AG04449 (cell line): ENCODE measurements at regions of chr2 and their contacts with region 1.

Region 1: DNA sequence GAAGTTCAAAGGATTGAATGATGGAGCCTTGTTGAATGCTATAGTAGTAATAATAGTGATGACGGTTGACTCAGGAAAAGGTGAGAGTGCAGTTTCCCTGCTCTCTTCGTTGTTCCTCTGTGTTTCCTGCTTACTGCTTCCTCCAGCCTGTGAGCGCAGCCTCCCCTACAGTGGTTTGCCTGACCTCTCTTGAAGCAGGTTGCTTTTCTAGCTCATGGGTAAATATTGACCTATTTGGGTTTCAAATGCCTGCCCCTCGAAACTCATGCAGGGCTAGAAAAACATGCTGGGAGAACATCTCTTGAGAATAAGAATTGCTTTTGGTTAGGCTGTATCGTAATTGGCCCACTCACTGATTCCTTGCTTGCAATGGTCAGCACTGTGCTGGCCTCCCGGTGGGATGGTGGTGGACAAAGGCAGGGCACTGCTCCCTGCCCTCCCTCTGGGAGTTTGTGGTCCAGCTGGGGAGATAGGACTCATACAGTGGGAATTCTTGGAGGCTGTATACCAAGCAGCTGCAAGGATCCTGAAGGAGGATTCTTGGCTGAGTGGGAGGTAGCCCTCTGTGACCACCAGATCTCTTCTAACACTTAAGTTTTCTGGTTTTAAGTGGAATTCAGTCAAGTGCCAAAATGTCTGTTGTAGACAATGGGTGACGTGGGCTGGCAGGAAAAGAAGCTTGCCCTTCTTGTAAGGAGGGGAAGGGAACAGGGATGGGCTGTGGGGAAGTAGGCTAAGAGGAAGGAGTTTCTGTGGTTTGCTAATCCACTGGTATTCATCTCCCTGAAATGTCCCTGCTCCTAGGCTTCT is 5.4 kb upstream of the RNF181 start:
- DNase-seq: peak; percentile 79
- H3K4me3 ChIP-seq: no peak overlapping the region
- CTCF ChIP-seq: no peak

Region 2: DNA sequence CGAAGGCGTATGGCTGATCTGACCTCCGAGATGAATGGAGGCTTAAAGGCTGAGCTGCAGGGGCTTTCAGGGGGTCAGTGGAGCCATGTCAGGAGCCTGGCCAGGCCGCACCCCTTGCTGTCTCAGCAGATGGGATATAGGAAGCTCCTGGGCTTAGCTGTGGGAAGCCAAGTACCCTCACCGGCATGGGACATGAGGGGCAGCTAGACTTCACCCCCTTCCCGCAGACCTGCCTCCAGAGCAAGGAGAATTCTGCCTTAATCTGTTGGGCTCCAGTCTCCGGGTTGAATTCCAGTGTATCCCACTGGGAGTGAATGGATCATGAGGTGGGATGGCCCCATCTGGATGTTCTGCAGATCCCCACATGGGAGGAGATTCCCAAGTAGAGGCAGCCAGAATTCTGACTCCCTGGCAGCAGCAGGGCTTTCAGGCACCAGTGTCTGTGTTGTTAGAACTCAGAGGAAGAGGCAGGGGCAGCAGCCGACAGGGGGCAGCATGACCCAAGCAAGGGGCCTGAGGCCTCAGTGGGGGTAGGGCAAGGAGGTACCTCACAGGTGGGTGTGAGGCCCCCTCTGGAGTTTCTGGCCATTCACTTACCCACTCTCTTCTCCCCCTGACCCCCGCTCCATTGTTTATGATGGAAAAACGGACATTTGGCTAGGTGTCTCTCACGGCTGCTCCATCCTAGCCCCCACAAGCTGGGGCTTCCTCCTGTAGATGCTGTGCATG is 199.1 kb before region 1 on chr2:
- CTCF ChIA-PET with region 1: no interaction called
- POLR2A ChIA-PET with region 1: no interaction called
- DNase-seq: no peak
- H3K4me3 ChIP-seq: no peak overlapping the region
- CTCF ChIP-seq: peak; percentile 78

Region 3: DNA sequence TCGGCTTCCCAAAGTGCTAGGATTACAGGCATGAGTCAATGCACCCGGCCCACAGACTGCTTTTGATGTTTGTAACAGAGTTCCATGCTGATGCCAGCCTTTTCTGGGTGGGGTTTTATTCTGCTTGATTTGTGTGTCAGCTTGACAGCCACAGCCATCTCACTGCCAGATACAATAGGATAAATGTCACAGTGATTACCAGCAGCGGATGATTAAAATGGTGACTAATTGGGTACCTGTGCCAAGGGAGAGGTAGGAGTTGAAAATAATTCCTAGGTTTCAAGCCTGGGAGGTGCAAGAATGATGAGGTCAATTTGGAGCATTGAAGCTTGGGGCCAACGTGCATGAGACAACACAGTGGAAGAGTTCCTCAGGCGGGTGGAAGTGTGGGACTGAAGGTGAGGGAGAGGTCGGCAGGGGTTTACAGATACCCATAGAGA is 132.3 kb before region 1 on chr2:
- CTCF ChIA-PET with region 1: no interaction called
- POLR2A ChIA-PET with region 1: no interaction called
- DNase-seq: no peak
- H3K4me3 ChIP-seq: no peak overlapping the region
- CTCF ChIP-seq: no peak

Region 4: DNA sequence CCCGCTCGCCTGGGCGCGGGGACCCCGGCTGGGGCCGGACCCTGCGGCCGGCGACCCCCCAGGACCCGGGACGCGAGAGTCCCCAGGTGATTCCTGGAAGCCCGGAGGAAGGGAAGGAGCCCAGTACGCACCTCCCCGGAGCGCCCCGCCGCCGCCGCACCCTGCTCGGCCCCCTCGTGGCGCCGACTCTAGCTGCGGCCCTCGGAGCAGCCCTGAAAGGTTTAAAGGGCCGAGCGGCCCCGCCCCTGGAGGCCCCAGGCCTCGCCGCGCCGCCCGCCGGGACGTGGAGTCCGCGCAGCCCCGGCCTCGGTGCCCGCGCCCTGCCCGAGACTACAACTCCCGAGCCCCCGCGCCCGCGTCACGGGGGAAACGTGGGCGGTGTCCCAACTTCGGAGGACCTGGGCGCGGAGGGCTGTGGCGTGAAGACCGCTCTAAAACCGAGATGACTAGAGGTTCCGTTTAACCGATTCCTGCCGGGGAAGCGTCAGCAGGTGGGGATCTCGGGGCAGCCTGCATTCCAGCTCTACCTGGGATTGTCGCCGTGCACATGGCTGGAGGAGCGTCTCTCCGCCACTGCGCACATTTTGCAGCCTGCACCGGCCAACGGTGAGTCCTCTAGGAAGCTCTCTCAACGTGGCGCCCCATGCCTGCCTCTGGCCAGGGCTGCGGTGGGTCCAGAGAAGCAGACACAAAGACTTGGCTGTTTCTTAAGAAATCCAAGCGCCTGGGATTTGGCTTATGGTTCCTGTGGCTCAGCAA is 12.5 kb after region 1 on chr2 and contains the start of gene TMEM150A:
- CTCF ChIA-PET with region 1: interaction called, 11 read pairs
- POLR2A ChIA-PET with region 1: interaction called, 15 read pairs
- DNase-seq: no peak
- H3K4me3 ChIP-seq: peak within 1 kb of the TSS; percentile 99
- CTCF ChIP-seq: peak; percentile 62

Region 5: GRCh38 chr2:85694052-85695025 is 104.2 kb after region 1 on chr2 and contains the start of gene GNLY:
- CTCF ChIA-PET with region 1: no interaction called
- POLR2A ChIA-PET with region 1: no interaction called
- DNase-seq: no peak
- H3K4me3 ChIP-seq: no peak within 1 kb of the TSS
- CTCF ChIP-seq: no peak